Right ventricle myocardium inferior (tissue), 1 donor: ENCODE measurements at regions of chr21 and their contacts with region 1.

Region 1: GRCh38 chr21:38297194-38297631 is 40.4 kb downstream of the KCNJ15 start:
- DNase-seq: peak; percentile 53
- ATAC-seq: peak; percentile 54

Region 2: GRCh38 chr21:38211321-38211720 is 85.9 kb before region 1 on chr21:
- intact Hi-C with region 1: no loop called
- DNase-seq: no peak
- ATAC-seq: no peak

Region 3: DNA sequence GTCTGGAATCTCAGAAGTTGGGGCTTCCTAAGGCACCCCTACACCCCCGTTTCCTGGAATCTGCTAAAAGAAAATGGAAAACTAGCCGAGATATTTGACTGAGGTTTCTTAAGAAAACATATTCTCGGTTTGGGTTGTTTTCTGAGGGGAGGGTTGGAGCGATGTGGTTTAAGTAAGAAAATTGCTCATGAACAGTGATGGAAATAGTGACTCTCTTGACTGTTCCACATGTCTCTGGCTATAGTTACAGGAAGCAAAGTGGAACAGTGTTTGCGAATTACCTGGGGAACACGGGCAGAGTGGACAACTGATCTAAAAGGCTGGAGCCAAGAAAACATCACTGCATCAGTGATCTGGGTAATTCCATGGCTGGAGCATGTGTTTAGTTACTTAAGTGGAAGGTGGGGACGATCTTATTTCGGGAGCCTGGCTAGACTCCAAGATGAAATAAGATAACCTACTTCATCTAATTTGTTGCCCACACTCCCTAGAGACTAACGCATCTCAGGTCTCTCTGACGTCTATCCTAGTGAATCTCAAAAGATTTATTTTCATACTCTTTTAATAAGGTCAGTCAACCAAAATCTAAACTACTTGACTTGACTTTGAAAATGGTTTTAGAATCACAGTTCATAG is 52.0 kb after region 1 on chr21:
- intact Hi-C with region 1: loop called (anchors 5 kb)
- DNase-seq: no peak
- ATAC-seq: no peak